Activated CD4-positive, alpha-beta T cell treated with anti-CD3 and anti-CD28 coated beads for 36 hours (primary cell): ENCODE measurements at regions of chr16 and their contacts with region 1.

Region 1: DNA sequence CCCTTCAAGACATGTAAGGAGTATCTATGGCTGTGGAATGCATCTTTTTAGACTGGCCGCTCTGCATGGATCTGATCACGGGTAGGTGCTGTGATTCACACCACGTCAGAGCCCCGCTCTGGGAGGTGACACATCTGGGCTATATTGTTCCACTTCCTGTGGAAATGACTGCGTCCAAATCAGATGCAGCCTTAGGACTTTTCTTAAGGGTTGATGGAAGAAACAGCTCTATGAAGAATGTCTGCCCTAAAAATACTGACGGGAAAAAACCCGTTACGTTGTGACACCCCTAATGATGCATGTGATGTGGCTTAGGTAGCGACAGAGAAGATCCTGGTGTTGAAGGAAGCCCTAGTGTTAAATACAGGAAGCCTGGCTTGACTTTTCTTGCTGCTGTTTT is 12.2 kb downstream of the BANP start:
- DNase-seq: peak; percentile 90
- ATAC-seq: peak; percentile 97
- H3K4me3 Mint-ChIP-seq: peak overlapping the region; percentile 51
- H3K27ac Mint-ChIP-seq: peak overlapping the region; percentile 96
- H3K4me1 Mint-ChIP-seq: peaks cover 79% of the 10 kb centered on the region
- H3K27me3 Mint-ChIP-seq: no peaks in the 10 kb centered on the region

Region 2: GRCh38 chr16:87976665-87977064 is 13.3 kb after region 1 on chr16:
- CTCF ChIA-PET with region 1: interaction called, 4 read pairs
- POLR2A ChIA-PET with region 1: no interaction called
- intact Hi-C with region 1: loop called (anchors 1 to 2 kb)
- DNase-seq: no peak
- ATAC-seq: no peak
- H3K4me3 Mint-ChIP-seq: no peak overlapping the region
- H3K27ac Mint-ChIP-seq: peak overlapping the region; percentile 34
- H3K4me1 Mint-ChIP-seq: peaks cover 61% of the 10 kb centered on the region
- H3K27me3 Mint-ChIP-seq: no peaks in the 10 kb centered on the region

Region 3: GRCh38 chr16:87982491-87983415 is 19.4 kb after region 1 on chr16:
- CTCF ChIA-PET with region 1: interaction called, 8 read pairs
- POLR2A ChIA-PET with region 1: interaction called, 4 read pairs
- intact Hi-C with region 1: loop called (anchors 1 to 2 kb)
- DNase-seq: no peak
- ATAC-seq: no peak
- H3K4me3 Mint-ChIP-seq: no peak overlapping the region
- H3K27ac Mint-ChIP-seq: peak overlapping the region; percentile 75
- H3K4me1 Mint-ChIP-seq: peaks cover 82% of the 10 kb centered on the region
- H3K27me3 Mint-ChIP-seq: no peaks in the 10 kb centered on the region

Region 4: DNA sequence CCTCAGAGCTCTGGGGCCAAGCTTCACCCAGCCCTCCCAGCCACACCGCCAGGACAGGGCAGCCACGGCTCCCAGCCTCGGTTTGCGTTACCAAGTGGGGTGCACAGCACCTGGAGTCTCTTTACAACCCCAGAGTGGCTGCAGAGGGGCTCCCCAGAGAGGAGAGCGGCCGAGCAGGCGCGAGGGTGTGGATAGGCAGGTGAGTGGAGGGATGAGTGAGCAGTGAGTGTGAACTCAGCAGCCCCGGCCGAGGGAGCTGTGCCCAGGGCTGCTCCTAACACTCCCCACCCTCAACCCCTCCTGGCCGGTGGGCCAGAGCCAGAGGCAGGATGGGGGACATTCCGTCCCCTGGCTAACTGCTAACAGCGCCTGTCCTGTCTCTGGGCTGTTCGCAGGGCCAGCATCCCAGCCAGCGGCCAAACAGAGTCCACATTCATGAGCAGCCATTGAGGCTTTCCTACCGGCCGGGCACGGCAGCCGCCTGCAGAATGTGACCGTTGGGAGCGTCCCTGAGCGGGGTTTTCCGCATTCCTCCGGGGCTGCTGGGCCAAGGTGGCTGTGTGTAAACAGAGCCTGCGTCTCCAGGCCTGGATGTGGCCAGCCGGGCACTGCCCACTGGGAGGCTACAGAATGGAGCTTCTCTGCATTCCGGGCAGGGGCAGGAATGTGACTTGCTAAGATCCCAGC is 424.7 kb after region 1 on chr16:
- CTCF ChIA-PET with region 1: no interaction called
- POLR2A ChIA-PET with region 1: no interaction called
- intact Hi-C with region 1: no loop called
- DNase-seq: no peak
- ATAC-seq: no peak
- H3K4me3 Mint-ChIP-seq: no peak overlapping the region
- H3K27ac Mint-ChIP-seq: no peak overlapping the region
- H3K4me1 Mint-ChIP-seq: no peaks in the 10 kb centered on the region
- H3K27me3 Mint-ChIP-seq: peaks cover 29% of the 10 kb centered on the region